Aorta (tissue), 5 donors: ENCODE measurements at regions of chr11 and their contacts with region 1.

Region 1: GRCh38 chr11:19553683-19554333 is 158.8 kb upstream of the NAV2 start:
- DNase-seq: peak; percentile 87 to 95
- ATAC-seq: peak; percentile 85
- H3K4me3 ChIP-seq: no peak overlapping the region
- H3K27ac ChIP-seq: no peak overlapping the region
- H3K4me1 ChIP-seq: no peaks in the 10 kb centered on the region
- H3K27me3 ChIP-seq: no peaks in the 10 kb centered on the region

Region 2: DNA sequence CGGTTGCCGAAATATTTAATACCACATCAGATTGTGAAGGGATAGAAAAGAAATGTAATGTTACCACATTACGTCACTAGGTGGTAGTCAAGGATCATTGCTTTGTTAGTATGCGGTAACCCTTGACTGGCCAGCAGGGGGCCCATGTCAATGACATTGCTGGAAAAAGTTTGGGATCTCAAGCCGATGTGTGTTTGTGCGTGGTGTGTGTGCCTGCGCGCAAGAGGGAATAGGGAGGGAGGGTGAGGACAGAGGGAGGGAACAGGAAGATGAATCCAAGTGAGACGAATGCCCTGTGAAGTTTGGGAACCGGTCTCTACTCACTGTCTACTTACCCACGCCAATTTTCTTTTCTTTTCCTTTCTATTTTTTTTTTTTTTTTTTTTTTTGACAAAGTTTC is 482.6 kb before region 1 on chr11:
- intact Hi-C with region 1: loop called (anchors 5 kb)
- DNase-seq: peak; percentile 75 to 87
- ATAC-seq: peak; percentile 84
- H3K4me3 ChIP-seq: no peak overlapping the region
- H3K27ac ChIP-seq: no peak overlapping the region
- H3K4me1 ChIP-seq: no peaks in the 10 kb centered on the region
- H3K27me3 ChIP-seq: no peaks in the 10 kb centered on the region

Region 3: GRCh38 chr11:19259487-19260345 is 294.1 kb before region 1 on chr11:
- intact Hi-C with region 1: loop called (anchors 1 to 5 kb)
- DNase-seq: peak; percentile 71 to 88
- ATAC-seq: peak; percentile 78
- H3K4me3 ChIP-seq: no peak overlapping the region
- H3K27ac ChIP-seq: no peak overlapping the region
- H3K4me1 ChIP-seq: no peaks in the 10 kb centered on the region
- H3K27me3 ChIP-seq: no peaks in the 10 kb centered on the region

Region 4: DNA sequence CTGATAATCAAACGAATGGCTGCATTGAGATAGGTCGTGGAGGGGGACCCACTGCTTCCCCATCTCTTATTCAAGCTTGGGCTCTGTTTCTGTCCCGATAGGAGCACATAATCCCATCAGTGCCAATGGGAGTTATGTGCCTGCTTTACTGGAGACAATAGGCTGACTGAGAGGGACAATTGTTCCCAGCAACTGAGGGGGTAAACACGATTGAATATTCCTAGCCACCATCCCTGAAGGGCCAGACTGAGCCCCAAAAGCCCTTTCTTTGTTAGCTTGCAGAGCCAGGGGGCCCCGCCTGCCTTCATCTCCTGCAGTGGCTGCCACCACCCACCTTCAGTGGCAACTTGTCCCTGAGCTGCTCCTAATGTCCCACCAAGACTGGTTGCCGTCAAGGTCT is 13.9 kb before region 1 on chr11:
- intact Hi-C with region 1: no loop called
- DNase-seq: no peak
- ATAC-seq: no peak
- H3K4me3 ChIP-seq: no peak overlapping the region
- H3K27ac ChIP-seq: no peak overlapping the region
- H3K4me1 ChIP-seq: no peaks in the 10 kb centered on the region
- H3K27me3 ChIP-seq: no peaks in the 10 kb centered on the region

Region 5: DNA sequence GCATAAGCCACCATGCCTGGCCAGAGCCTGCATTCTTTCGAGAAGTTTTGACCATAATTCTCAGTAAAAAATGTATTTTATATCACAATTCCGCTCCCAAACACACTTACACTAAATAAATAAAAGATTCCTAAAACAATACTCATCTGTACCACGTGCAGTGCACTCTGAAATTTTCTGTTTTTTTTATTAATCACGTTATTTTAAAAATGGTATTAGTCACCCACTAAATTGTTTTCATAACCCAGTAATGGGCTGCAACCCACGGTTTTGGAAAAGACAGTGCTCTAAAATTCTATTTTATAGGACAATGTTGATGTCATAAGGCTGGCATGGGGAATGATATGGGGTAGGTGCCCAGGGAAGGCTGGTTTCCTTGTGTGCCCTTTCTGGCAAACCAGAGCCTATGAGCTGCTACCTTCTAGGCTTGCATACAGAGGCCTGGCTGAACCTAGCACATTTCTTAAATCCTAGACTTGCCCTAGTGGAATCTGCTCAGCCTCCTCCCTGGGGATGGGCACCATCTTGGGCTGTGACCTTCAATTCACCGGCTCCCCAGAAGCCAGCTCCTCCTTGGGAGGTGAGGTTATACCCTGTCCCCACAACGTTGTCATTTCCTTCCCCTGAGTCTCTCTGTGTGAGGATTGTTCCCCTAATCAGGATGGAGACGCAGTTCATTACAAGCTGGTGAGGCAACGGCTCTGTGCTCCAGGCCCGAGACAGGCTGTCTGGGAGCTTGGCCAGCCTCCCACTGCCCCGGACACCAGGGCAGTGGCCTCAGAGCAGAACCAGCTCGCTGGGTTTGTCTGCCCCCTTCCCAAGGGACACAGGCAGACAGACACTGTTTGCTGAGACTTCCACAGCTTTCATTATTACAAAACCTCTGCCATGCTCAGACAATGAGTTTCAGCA is 42.3 kb after region 1 on chr11:
- intact Hi-C with region 1: no loop called
- DNase-seq: peak; percentile 89 to 93
- ATAC-seq: peak; percentile 86
- H3K4me3 ChIP-seq: peak overlapping the region in 1 of 2 donors; percentile 8
- H3K27ac ChIP-seq: peak overlapping the region; percentile 94 to 96
- H3K4me1 ChIP-seq: peaks cover 5 to 8% of the 10 kb centered on the region in 2 donors
- H3K27me3 ChIP-seq: no peaks in the 10 kb centered on the region

Region 6: GRCh38 chr11:19903620-19904069 is 349.8 kb after region 1 on chr11:
- intact Hi-C with region 1: loop called in 1 of 2 experiments (anchors 5 kb)
- DNase-seq: peak; percentile 82 to 85
- ATAC-seq: peak; percentile 85
- H3K4me3 ChIP-seq: no peak overlapping the region
- H3K27ac ChIP-seq: peak overlapping the region in 1 of 2 donors; percentile 74
- H3K4me1 ChIP-seq: peaks cover 0 to 7% of the 10 kb centered on the region in 2 donors
- H3K27me3 ChIP-seq: no peaks in the 10 kb centered on the region

Region 7: GRCh38 chr11:20355221-20356219 is 801.7 kb after region 1 on chr11:
- intact Hi-C with region 1: loop called in 1 of 2 experiments (anchors 10 kb)
- DNase-seq: no peak
- ATAC-seq: no peak
- H3K4me3 ChIP-seq: no peak overlapping the region
- H3K27ac ChIP-seq: no peak overlapping the region
- H3K4me1 ChIP-seq: peaks cover 0 to 1% of the 10 kb centered on the region in 2 donors
- H3K27me3 ChIP-seq: no peaks in the 10 kb centered on the region